ENCODE measurements at regions of chrX and their contacts with region 1.

Region 1: DNA sequence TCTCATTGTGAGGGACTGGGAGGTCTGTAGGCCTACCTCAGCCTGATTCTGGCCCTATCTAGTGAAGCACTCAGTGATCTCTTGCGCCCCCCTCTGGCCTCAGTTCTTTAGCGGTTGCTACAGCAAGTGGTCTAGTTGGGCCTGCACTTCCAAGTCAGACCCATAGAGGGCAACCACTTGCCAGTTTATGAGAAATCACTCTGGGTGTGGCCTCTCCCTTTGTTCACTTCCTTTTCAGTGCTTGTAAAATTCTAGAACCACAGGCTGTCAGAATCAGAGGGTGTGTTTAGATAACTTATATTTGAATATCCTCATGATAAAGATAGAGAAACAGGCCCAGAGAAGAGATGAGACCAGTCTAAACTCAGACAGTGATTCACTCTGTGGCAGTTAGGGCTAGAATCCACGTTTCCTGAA is 60.9 kb upstream of the LAS1L start:
- DNase-seq: peak; percentile 71
- ATAC-seq: peak; percentile 91
- H3K4me3 Mint-ChIP-seq: peak overlapping the region; percentile 76
- H3K27ac Mint-ChIP-seq: peak overlapping the region; percentile 94
- H3K4me1 Mint-ChIP-seq: peaks cover 44% of the 10 kb centered on the region
- H3K27me3 Mint-ChIP-seq: no peaks in the 10 kb centered on the region
- CTCF ChIP-seq: no peak

Region 2: DNA sequence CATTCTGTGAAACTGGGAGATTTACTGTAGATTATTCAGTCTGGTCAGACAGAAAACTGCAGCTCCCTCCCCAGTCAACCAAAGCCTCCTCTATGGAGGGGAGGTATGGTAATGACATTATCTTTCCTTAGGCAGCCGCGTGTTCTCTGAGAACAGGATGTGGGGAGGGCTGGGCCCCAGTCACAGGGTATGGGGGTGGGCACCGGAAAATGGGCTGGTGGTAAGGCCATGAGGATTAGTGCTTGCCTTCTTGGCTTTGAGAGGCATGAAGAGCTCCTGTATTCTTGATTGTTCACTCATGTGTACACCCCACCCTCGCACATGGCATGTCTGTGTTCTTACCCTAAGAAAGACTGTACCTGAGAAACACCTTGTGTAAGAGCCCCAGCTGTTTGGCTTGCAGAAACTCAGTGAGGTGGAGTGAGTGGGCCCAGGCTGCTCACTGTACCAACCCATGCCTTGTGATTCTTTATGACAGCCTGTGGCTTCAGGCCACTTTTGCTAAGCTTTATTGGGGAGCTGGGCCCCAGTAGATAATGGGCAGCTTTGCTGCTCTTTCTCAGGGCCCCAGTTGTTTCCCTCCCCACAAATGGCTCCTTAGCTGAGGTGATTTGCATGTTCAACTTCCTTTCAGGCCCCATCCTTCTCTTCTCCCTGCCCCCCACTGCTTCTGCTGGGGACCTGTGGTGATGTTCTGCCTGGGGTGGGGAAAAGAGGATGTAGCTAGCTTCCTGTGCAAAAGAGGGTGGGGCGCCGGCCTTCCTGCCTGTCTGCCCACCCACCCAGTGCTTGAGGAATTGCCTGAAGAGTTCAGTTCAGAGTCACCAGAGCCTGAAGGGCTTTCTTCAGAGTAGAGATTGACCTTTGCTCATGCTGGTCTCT is 102.7 kb after region 1 on chrX:
- CTCF ChIA-PET with region 1: interaction called, 3 read pairs
- POLR2A ChIA-PET with region 1: interaction called, 3 read pairs
- intact Hi-C with region 1: loop called (anchors 2 kb)
- DNase-seq: peak; percentile 28
- ATAC-seq: peak; percentile 55
- H3K4me3 Mint-ChIP-seq: peak overlapping the region; percentile 67
- H3K27ac Mint-ChIP-seq: peak overlapping the region; percentile 91
- H3K4me1 Mint-ChIP-seq: peaks cover 95% of the 10 kb centered on the region
- H3K27me3 Mint-ChIP-seq: no peaks in the 10 kb centered on the region
- CTCF ChIP-seq: no peak

Region 3: DNA sequence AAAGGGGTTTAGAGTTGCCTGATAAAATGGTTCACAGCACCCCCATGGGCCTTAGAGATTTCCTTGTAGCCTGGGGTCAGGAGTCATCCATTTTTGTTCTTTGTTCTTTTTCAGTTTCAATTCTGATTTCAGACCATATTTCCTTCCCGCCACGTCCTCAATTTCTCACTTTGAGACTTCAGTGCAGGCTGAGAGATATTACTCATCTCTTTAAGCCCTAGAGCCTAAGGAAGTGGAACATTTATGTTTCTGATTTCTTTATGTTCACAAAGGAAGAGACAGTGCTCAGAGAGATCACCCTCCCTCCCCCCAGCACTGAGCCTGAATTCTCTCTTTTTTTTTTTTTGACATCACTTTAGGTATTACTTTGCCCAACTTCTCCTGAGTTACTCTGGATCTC is 128.2 kb after region 1 on chrX:
- CTCF ChIA-PET with region 1: interaction called, 4 read pairs
- POLR2A ChIA-PET with region 1: interaction called, 15 read pairs
- intact Hi-C with region 1: loop called (anchors 2 kb)
- DNase-seq: no peak
- ATAC-seq: peak; percentile 88
- H3K4me3 Mint-ChIP-seq: peak overlapping the region; percentile 32
- H3K27ac Mint-ChIP-seq: peak overlapping the region; percentile 76
- H3K4me1 Mint-ChIP-seq: peaks cover 87% of the 10 kb centered on the region
- H3K27me3 Mint-ChIP-seq: no peaks in the 10 kb centered on the region
- CTCF ChIP-seq: no peak

Region 4: GRCh38 chrX:65871661-65872311 is 276.3 kb after region 1 on chrX:
- CTCF ChIA-PET with region 1: no interaction called
- POLR2A ChIA-PET with region 1: no interaction called
- intact Hi-C with region 1: loop called (anchors 1 kb)
- DNase-seq: no peak
- ATAC-seq: peak; percentile 40
- H3K4me3 Mint-ChIP-seq: no peak overlapping the region
- H3K27ac Mint-ChIP-seq: no peak overlapping the region
- H3K4me1 Mint-ChIP-seq: peaks cover 18% of the 10 kb centered on the region
- H3K27me3 Mint-ChIP-seq: no peaks in the 10 kb centered on the region
- CTCF ChIP-seq: no peak

Region 5: DNA sequence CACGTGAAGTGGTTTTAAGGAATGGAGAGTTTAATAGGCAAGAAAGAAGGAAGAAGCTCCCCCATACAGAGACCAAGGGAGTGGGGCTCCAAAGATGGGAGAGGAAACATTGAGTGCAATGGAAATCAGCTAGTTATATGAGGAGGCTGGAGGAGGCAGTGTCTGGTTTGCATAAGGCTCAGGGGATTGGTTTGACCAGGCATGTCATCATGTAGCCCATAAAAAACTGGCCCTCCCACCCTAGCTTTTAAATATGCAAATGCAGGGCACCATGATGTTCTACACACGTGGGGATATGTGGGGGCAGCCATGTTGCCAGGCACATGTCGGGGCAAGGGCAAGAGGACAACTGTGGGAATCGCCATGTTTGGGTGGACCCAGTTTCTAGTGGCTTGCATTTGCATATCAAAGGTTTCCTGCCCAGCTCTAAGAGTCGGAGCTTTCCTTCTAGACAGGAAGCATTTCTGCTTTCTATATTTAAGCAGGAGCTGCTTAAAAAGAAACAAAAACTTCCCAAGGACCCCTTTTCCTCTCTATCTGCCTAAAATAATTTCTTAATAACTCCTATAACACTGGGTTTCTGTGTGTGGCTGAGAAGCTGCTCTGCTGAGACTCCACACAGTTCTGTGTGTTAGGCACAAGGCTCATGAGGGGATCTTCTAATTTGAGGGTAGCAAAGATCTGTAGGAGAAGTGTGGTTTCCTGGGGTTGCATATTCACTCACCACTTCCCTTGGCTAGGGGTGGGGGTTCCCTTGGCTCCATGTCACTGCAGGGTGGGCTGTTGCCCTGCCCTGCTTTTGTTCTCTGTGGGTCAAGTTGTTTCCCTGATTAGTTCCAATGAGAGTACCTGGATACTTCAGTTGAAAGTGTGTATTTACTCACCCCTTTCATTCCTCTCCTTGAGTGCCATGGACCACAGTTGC is 330.9 kb after region 1 on chrX:
- CTCF ChIA-PET with region 1: no interaction called
- POLR2A ChIA-PET with region 1: no interaction called
- intact Hi-C with region 1: loop called (anchors 1 kb)
- DNase-seq: no peak
- ATAC-seq: peak; percentile 71
- H3K4me3 Mint-ChIP-seq: peak overlapping the region; percentile 53
- H3K27ac Mint-ChIP-seq: peak overlapping the region; percentile 71
- H3K4me1 Mint-ChIP-seq: peaks cover 39% of the 10 kb centered on the region
- H3K27me3 Mint-ChIP-seq: no peaks in the 10 kb centered on the region
- CTCF ChIP-seq: no peak

Region 6: GRCh38 chrX:66015152-66015831 is 419.8 kb after region 1 on chrX:
- CTCF ChIA-PET with region 1: interaction called, 4 read pairs
- POLR2A ChIA-PET with region 1: interaction called, 7 read pairs
- intact Hi-C with region 1: loop called (anchors 10 kb)
- DNase-seq: peak; percentile 16
- ATAC-seq: peak; percentile 43
- H3K4me3 Mint-ChIP-seq: peak overlapping the region; percentile 73
- H3K27ac Mint-ChIP-seq: peak overlapping the region; percentile 93
- H3K4me1 Mint-ChIP-seq: peaks cover 95% of the 10 kb centered on the region
- H3K27me3 Mint-ChIP-seq: no peaks in the 10 kb centered on the region
- CTCF ChIP-seq: no peak

Measured in activated B cell treated with CpG ODN at 0.5 μM for 24 hours (primary cell).